PC-9 (cell line): ENCODE measurements at regions of chr10 and their contacts with region 1.

Region 1: GRCh38 chr10:90834326-90834725 is 23.5 kb downstream of the HTR7 start:
- DNase-seq: no peak
- H3K4me3 ChIP-seq: no peak overlapping the region
- H3K27ac ChIP-seq: no peak overlapping the region
- H3K4me1 ChIP-seq: no peaks in the 10 kb centered on the region
- H3K27me3 ChIP-seq: no peaks in the 10 kb centered on the region
- CTCF ChIP-seq: no peak

Region 2: GRCh38 chr10:90769946-90770841 is 64.1 kb before region 1 on chr10:
- CTCF ChIA-PET with region 1: no interaction called
- POLR2A ChIA-PET with region 1: no interaction called
- intact Hi-C with region 1: loop called (anchors 2 kb)
- DNase-seq: no peak
- H3K4me3 ChIP-seq: no peak overlapping the region
- H3K27ac ChIP-seq: no peak overlapping the region
- H3K4me1 ChIP-seq: no peaks in the 10 kb centered on the region
- H3K27me3 ChIP-seq: no peaks in the 10 kb centered on the region
- CTCF ChIP-seq: no peak